GM12878 (cell line): ENCODE measurements at regions of chr16 and their contacts with region 1.

Region 1: DNA sequence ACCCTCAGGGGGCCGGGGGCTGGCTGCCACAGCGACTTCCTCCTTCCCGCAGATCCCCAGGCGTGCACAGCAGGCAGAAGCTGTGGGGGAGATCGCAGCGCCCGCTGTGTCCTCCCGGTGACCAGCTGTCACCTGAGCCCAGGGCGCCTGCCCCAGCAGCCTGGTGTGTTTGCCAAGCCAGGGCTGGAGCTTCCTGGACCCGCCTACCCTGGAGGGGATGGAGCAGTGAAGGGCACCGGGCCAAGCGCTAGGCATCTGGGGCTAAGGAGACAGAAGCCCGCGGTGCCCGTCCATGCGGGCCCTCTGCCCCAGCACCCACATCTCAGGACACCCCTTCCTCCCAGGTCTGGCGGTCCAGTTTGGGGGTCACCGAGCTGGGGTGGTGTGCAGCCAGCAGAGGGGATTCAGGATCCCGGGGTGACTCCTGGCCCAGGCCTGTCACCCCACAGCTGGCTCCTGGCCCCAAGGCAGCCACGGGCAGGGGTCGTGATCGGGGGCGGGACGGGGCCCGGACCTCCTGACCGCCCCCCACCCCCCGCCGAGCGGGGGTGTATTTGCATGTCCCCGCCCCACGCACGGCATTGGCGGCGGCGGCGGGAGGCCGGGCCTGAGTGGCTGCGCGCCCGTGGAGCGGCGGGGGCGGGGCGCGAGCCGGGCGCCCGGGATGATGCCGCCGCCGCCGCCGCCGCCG is at the start of gene RAB26:
- DNase-seq: no peak
- ATAC-seq: peak; percentile 37
- H3K4me3 ChIP-seq: peak within 1 kb of the TSS; percentile 55; the same call in 1 of the 2 replicates
- H3K27ac ChIP-seq: no peak within 1 kb of the TSS
- H3K4me1 ChIP-seq: peaks cover 37% of the 10 kb centered on the region
- H3K27me3 ChIP-seq: no peaks in the 10 kb centered on the region
- CTCF ChIP-seq: no peak
- EP300 ChIP-seq: no peak
- POLR2A ChIP-seq: no peak
- RAD21 ChIP-seq: no peak
- polyA plus RNA-seq, gene RAB26: 0.13 to 0.27 TPM

Region 2: DNA sequence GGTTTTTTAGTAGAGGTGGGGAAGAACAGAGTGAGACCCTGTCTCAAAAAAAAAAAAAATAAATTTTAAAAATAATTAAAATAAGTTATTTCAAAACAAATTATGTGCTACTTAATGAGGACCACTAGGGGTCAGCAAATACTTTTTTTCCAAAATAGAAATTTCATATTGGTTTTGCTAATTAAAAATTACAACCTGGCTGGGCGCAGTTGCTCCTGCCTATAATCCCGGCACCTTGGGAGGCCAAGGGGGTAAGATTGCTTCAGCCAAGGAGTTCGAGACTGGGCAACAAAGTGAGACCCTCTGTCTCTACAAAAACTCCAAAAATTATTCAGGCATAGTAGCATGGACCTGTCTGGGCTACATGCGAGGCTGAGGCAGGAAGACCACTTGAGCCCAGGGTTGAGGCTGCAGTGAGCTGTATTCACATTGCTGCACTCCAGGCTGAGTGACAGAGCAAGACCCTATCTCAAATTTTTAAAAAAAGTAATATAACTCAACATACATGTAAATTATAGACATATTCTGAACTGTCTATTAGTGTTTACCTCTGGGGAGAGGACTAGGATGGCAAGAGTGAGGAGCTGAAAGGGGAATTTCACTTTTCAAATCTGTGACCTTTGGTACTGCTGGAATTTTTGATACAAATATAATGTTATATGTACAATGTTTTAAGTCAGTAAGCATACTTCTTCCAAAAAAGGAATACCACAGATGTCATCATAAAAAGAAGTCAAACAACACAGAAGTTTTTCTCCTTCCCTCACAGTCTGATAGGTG is 284.3 kb before region 1 on chr16:
- CTCF ChIA-PET with region 1: interaction called, 3 read pairs
- POLR2A ChIA-PET with region 1: no interaction called
- RAD21 ChIA-PET with region 1: no interaction called
- SMC1A ChIA-PET with region 1: no interaction called
- in situ Hi-C with region 1: loop called (anchors 10 kb)
- intact Hi-C with region 1: no loop called
- DNase-seq: no peak
- ATAC-seq: peak; percentile 55
- H3K4me3 ChIP-seq: no peak overlapping the region
- H3K27ac ChIP-seq: no peak overlapping the region
- H3K4me1 ChIP-seq: no peaks in the 10 kb centered on the region
- H3K27me3 ChIP-seq: no peaks in the 10 kb centered on the region; a peak in 2 of 4 replicates
- CTCF ChIP-seq: peak; percentile 42 to 53 (median 42); a peak in 3 of 6 replicates
- EP300 ChIP-seq: no peak
- POLR2A ChIP-seq: no peak
- RAD21 ChIP-seq: peak; percentile 47

Region 3: DNA sequence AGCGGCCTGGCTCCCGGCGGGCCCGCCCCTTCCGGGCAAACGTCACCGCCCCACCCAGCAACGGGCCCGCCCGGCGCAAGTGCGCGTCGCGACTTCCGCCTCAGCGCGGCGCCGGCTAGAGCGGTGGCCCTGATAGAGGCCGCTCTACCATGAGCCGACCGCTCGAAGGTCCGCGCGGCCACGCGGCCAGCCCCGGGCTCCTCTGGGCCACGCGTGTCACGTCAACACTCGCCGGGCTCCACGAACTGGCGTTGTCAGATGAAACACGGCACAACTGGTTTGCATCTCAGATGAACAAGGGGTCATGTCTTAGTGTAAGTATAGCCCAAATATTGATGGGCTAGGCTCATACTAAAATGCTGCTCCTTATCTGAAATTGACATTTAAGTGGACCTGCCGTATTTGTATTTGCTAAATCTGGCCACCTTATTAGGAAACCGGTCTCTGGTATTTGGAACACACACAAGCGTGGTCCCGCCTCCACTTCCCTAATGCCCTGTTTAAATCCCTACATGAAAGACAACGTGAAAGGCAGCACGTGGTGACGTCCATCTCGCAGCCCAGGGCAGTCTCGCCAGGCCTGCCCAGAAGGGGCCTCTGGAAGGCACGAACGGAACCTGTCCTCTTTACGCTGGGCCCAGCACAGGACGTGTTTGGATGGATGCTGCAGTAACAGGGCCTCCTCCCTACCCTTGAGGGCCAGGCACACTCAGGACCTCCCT is 138.2 kb before region 1 on chr16 and contains the start of gene ZNF598:
- CTCF ChIA-PET with region 1: interaction called, 7 read pairs
- POLR2A ChIA-PET with region 1: no interaction called
- RAD21 ChIA-PET with region 1: no interaction called
- SMC1A ChIA-PET with region 1: no interaction called
- in situ Hi-C with region 1: no loop called
- intact Hi-C with region 1: loop called (anchors 5 kb)
- DNase-seq: no peak
- ATAC-seq: peak; percentile 93
- H3K4me3 ChIP-seq: peak within 1 kb of the TSS; percentile 100
- H3K27ac ChIP-seq: peak within 1 kb of the TSS; percentile 89
- H3K4me1 ChIP-seq: peaks cover 15% of the 10 kb centered on the region
- H3K27me3 ChIP-seq: no peaks in the 10 kb centered on the region
- CTCF ChIP-seq: no peak
- EP300 ChIP-seq: no peak
- POLR2A ChIP-seq: peak; percentile 94
- RAD21 ChIP-seq: no peak
- polyA plus RNA-seq, gene ZNF598: 0.08 to 0.84 TPM

Region 4: GRCh38 chr16:2023098-2023925 is 124.8 kb before region 1 on chr16:
- CTCF ChIA-PET with region 1: interaction called, 6 read pairs
- POLR2A ChIA-PET with region 1: no interaction called
- RAD21 ChIA-PET with region 1: no interaction called
- SMC1A ChIA-PET with region 1: interaction called, 3 read pairs
- in situ Hi-C with region 1: loop called (anchors 5 kb)
- intact Hi-C with region 1: no loop called
- DNase-seq: peak; percentile 51
- ATAC-seq: peak; percentile 84
- H3K4me3 ChIP-seq: peak overlapping the region; percentile 19; the same call in 1 of the 2 replicates
- H3K27ac ChIP-seq: no peak overlapping the region
- H3K4me1 ChIP-seq: peaks cover 7% of the 10 kb centered on the region
- H3K27me3 ChIP-seq: peaks cover 13 to 17% of the 10 kb centered on the region in 2 experiments
- CTCF ChIP-seq: peak; percentile 97 to 99 (median 98)
- EP300 ChIP-seq: no peak
- POLR2A ChIP-seq: peak; percentile 29; the same call in 1 of the 2 replicates
- RAD21 ChIP-seq: peak; percentile 90

Region 5: DNA sequence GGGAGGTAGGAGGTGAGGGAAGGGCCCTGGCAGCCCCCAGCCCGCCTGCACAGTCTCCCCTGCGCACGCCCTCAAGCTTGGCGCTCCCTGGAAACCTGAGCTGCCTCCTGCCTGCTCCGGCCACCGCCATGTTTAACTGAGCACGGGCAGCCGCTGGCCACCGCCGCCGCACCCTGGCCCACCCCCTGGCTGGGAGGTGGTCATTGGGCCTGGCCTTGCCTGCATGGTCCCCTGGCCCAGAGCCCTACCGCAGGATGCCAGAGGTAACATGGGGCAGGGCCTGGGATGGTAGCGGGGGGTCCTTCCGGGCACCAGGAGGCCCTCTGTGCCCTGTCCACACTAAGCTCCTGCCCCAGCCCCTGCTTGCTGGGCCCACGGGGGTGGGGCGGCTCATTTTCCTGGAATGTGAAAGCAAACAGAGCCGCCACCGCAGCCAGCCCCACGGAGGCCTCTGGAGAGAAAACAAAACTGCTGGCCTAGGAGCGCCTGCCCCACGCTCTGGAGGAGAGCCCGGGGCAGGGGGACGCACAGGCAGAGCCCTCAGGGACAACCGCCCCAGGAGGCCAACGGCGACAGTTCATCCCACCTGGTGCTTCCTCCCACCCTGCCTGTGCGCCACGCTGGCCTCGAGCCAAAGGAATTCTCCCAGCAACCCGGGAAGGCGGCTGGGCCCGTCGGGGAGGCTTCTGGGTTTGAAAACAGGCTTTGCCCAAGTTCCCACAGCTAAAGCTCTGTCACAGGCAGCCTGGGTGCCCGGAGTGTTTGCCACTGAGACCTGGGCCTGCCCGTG is 112.5 kb before region 1 on chr16:
- CTCF ChIA-PET with region 1: no interaction called
- POLR2A ChIA-PET with region 1: no interaction called
- RAD21 ChIA-PET with region 1: no interaction called
- SMC1A ChIA-PET with region 1: no interaction called
- in situ Hi-C with region 1: no loop called
- intact Hi-C with region 1: no loop called
- DNase-seq: no peak
- ATAC-seq: no peak
- H3K4me3 ChIP-seq: no peak overlapping the region
- H3K27ac ChIP-seq: no peak overlapping the region
- H3K4me1 ChIP-seq: no peaks in the 10 kb centered on the region
- H3K27me3 ChIP-seq: no peaks in the 10 kb centered on the region
- CTCF ChIP-seq: no peak
- EP300 ChIP-seq: no peak
- POLR2A ChIP-seq: no peak
- RAD21 ChIP-seq: no peak

Region 6: DNA sequence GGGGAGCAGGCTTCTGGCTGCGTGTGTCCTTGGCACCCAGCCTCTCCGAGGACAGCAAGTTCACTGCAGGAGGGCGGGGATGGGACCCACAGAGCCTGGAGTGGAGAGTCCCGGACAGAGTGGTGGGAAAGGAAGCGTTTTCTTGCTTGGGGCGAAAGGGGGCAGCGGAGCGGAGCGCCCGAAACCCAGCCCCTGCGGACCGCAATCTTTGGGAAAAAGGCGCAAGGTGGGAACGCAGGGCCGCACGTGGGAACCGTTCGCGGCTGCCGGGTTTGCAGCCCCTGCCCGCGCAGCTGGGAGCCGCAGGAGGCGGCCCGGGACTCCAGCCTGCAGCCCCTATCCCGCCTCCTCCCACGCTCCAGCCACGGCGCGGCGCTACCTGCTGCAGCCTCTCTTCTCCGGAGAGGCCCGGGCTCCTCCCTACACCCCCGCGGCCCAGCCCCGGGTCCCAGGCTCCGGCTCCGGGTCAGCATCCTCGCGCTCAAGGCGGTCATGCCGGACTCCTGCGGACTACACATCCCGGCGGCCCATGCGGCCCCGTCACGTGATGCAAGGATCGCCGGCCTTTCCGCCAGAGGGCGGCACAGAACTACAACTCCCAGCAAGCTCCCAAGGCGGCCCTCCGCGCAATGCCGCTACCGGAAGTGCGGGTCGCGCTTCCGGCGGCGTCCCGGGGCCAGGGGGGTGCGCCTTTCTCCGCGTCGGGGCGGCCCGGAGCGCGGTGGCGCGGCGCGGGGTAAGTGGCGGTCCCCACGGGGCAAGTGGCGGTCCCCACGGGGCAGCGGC is 100.6 kb before region 1 on chr16 and contains the starts of genes NTHL1 and TSC2:
- CTCF ChIA-PET with region 1: interaction called, 3 read pairs
- POLR2A ChIA-PET with region 1: interaction called, 10 read pairs
- RAD21 ChIA-PET with region 1: no interaction called
- SMC1A ChIA-PET with region 1: no interaction called
- in situ Hi-C with region 1: no loop called
- intact Hi-C with region 1: no loop called
- DNase-seq: peak; percentile 82
- ATAC-seq: peak; percentile 98
- H3K4me3 ChIP-seq: peak within 1 kb of the TSS; percentile 97
- H3K27ac ChIP-seq: peak within 1 kb of the TSS; percentile 48
- H3K4me1 ChIP-seq: peaks cover 22% of the 10 kb centered on the region
- H3K27me3 ChIP-seq: no peaks in the 10 kb centered on the region
- CTCF ChIP-seq: peak in 2 of 3 experiments; percentile 22 to 29; a peak in 3 of 6 replicates
- EP300 ChIP-seq: no peak
- POLR2A ChIP-seq: peak; percentile 83
- RAD21 ChIP-seq: no peak
- polyA plus RNA-seq, gene NTHL1: 0.85 to 9.2 TPM
- polyA plus RNA-seq, gene TSC2: 1.6 to 3.9 TPM

Region 7: DNA sequence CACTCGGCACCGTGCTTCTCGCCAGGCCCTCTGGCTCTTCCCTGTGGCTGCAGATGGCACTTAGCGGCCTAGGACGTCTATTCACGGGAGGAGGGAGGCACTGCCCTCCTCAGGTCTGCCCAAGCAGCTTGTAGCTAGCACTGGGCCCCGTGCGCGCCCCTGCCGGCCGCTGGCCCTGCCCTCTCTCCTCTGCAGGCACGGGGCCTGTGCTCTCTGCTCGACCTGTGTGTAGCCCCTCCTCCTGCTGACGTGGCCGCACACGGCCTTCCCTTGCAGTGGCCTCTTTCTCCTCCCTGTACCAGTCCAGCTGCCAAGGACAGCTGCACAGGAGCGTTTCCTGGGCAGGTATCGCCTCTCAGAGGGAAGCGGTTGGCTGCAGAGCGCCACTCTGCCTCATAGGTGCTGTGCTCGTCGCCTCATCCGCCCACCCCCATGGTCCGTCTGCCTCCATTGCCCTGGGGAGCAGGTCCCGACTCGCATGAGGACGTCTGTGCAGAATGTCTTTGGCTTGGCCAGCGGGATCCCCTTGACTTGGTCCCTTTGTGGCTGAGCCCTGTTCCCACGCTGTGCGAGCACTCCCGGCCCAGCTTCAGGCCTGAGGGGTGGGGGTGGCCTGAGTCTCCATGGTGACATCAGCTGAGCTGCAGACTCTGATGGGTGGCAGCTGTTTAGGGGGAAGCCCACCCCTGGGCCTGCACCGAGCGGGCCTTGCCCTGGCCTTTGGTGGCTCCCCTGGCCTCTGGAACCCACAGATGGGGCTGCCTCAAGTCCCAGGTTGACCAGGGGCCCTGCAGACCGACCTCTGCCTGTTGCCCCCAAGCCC is 65.8 kb before region 1 on chr16:
- CTCF ChIA-PET with region 1: no interaction called
- POLR2A ChIA-PET with region 1: no interaction called
- RAD21 ChIA-PET with region 1: no interaction called
- SMC1A ChIA-PET with region 1: no interaction called
- in situ Hi-C with region 1: loop called (anchors 10 kb)
- intact Hi-C with region 1: no loop called
- DNase-seq: no peak
- ATAC-seq: no peak
- H3K4me3 ChIP-seq: no peak overlapping the region
- H3K27ac ChIP-seq: no peak overlapping the region
- H3K4me1 ChIP-seq: no peaks in the 10 kb centered on the region
- H3K27me3 ChIP-seq: no peaks in the 10 kb centered on the region
- CTCF ChIP-seq: no peak
- EP300 ChIP-seq: no peak
- POLR2A ChIP-seq: no peak
- RAD21 ChIP-seq: no peak